AG04450 (cell line): ENCODE measurements at regions of chrX and their contacts with region 1.

Region 1: DNA sequence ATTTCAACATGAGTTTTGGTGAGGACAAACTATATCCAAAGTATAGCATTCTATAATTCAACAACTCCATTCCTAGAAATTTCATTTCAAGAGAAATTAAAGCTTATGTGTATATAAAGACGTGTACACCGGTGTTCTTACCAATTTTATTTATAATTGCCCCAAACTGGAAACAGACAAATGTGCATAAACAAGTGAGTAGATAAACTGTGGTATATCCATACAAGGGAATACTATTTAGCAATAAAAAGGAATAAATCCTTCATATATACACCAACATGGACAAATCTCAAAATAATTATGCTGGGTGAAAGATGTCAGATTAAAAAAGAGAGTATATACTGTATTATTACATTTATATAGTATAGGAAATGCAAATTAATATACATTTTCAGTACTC is 19.9 kb downstream of the HNRNPH2 start:
- DNase-seq: no peak
- H3K4me3 ChIP-seq: no peak overlapping the region
- H3K27ac ChIP-seq: no peak overlapping the region
- H3K27me3 ChIP-seq: no peaks in the 10 kb centered on the region
- CTCF ChIP-seq: no peak

Region 2: GRCh38 chrX:101219864-101220346 is 208.0 kb before region 1 on chrX:
- CTCF ChIA-PET with region 1: no interaction called
- POLR2A ChIA-PET with region 1: no interaction called
- DNase-seq: no peak
- H3K4me3 ChIP-seq: peak overlapping the region; percentile 51
- H3K27ac ChIP-seq: peak overlapping the region; percentile 61
- H3K27me3 ChIP-seq: no peaks in the 10 kb centered on the region
- CTCF ChIP-seq: no peak

Region 3: DNA sequence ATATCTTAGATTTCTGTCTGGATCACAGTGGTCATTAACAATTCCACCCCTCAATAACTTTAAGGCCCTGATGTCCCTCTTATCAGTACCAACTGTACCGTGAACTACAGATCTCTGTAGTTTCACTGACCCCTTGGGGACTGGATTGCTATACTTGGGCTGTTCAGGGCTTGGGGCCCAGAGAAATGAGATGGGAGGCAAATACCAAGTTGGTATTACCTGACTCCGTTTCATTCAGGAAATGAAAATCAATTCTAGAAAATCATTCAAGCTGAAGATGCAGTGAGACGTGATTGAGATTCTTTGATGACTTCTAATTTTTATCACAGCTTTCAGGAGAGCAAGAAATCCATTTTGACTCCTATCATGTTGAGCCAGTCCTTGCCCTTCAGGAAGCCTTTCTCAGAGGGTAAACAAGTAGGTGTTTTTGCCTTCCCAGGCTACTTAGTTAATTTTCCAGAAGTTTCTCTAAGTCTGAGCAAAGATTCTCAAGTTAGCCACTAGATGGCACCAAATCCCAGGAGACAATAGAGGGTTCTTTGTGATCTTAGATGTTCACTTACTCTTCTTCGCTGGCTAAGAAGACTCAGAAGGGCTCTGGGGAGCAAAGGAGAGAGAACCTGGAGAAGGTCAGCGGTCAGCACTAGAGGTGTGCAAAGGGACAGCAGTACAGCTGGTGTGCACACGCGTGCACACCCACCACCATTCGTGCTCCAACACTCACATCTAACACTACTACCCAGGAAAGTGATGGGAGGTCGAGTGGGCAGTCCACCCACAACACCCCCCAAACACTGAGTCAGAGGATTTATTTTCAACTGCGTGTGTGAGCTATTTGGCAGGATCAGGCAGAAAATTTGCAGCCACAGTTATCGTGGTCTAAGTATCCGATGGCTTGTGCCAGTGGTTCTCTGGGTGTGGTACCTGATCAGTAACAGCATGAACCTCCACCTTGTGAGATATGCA is 12.5 kb before region 1 on chrX:
- CTCF ChIA-PET with region 1: interaction called, 10 read pairs
- POLR2A ChIA-PET with region 1: interaction called, 14 read pairs
- DNase-seq: peak; percentile 63
- H3K4me3 ChIP-seq: no peak overlapping the region
- H3K27ac ChIP-seq: peak overlapping the region; percentile 2
- H3K27me3 ChIP-seq: no peaks in the 10 kb centered on the region
- CTCF ChIP-seq: peak; percentile 74

Region 4: GRCh38 chrX:101442085-101442484 is 14.1 kb after region 1 on chrX:
- CTCF ChIA-PET with region 1: no interaction called
- POLR2A ChIA-PET with region 1: no interaction called
- DNase-seq: no peak
- H3K4me3 ChIP-seq: no peak overlapping the region
- H3K27ac ChIP-seq: no peak overlapping the region
- H3K27me3 ChIP-seq: no peaks in the 10 kb centered on the region
- CTCF ChIP-seq: no peak

Region 5: GRCh38 chrX:101485199-101485949 is 57.4 kb after region 1 on chrX and contains the start of gene ARMCX4:
- CTCF ChIA-PET with region 1: no interaction called
- POLR2A ChIA-PET with region 1: no interaction called
- DNase-seq: peak; percentile 26
- H3K4me3 ChIP-seq: peak within 1 kb of the TSS; percentile 69
- H3K27ac ChIP-seq: peak within 1 kb of the TSS; percentile 65
- H3K27me3 ChIP-seq: no peaks in the 10 kb centered on the region
- CTCF ChIP-seq: no peak
- polyA plus RNA-seq, gene ARMCX4: 5.9 and 6.4 TPM in 2 replicates